Activated CD4-positive, alpha-beta memory T cell treated with anti-CD3 and anti-CD28 coated beads for 36 hours (primary cell): ENCODE measurements at regions of chr19 and their contacts with region 1.

Region 1: GRCh38 chr19:48970923-48971395 is 5.8 kb downstream of the FTL start:
- DNase-seq: peak; percentile 87
- H3K4me3 Mint-ChIP-seq: no peak overlapping the region
- H3K27ac Mint-ChIP-seq: no peak overlapping the region
- H3K4me1 Mint-ChIP-seq: peaks cover 21% of the 10 kb centered on the region
- H3K27me3 Mint-ChIP-seq: no peaks in the 10 kb centered on the region

Region 2: DNA sequence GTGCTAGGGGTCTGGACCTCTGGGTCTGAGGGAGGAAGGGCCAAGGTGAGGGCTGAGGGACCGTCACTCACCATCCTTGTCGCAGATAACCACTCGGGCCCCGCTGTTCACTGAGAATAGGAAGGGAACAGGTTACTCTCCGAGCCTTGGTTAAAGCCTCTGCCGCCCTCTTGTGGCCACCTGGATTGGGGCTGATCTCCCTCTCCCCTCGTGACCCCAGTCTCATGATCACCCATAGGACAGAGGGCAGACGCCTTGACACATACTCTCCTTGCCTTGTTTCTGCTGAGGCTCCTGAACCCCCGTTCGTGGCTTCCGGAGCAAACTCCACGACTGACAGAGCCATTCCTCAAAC is 135.2 kb before region 1 on chr19:
- CTCF ChIA-PET with region 1: interaction called, 14 read pairs
- POLR2A ChIA-PET with region 1: no interaction called
- intact Hi-C with region 1: loop called (anchors 2 kb)
- DNase-seq: peak; percentile 96
- H3K4me3 Mint-ChIP-seq: peak overlapping the region; percentile 73
- H3K27ac Mint-ChIP-seq: no peak overlapping the region
- H3K4me1 Mint-ChIP-seq: peaks cover 14% of the 10 kb centered on the region
- H3K27me3 Mint-ChIP-seq: peaks cover 9% of the 10 kb centered on the region

Region 3: DNA sequence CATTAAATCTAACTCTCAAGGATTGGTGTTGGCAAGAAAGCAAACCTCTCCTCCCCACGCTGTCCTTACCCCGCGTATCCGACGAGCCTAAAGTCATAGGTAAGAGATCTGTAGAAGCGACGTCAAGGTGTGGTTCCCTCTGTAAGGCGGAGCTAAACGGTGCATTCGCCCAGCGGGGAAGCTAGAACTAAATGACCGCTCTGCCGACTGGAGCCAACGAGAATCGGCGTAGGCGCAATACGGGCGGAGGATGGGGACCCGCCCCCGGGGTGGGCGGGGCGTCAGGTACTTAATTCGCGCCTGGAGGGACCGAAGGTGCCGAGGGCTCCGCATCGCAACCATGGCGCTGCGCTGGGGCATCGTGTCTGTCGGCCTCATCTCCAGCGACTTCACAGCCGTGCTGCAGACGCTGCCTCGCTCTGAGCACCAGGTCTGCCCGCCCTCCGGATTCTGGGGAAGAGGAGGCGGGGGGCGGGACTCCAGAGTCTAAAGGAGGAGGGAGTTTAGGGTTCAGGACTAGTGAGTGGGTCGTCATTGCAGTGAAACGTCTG is 37.5 kb before region 1 on chr19 and contains the start of gene DHDH:
- CTCF ChIA-PET with region 1: interaction called, 11 read pairs
- POLR2A ChIA-PET with region 1: no interaction called
- intact Hi-C with region 1: loop called (anchors 2 kb)
- DNase-seq: peak; percentile 89
- H3K4me3 Mint-ChIP-seq: peak within 1 kb of the TSS; percentile 78
- H3K27ac Mint-ChIP-seq: peak within 1 kb of the TSS; percentile 69
- H3K4me1 Mint-ChIP-seq: peaks cover 10% of the 10 kb centered on the region
- H3K27me3 Mint-ChIP-seq: no peaks in the 10 kb centered on the region
- total RNA-seq, gene DHDH: 2.0 to 2.8 TPM

Region 4: GRCh38 chr19:48954595-48955310 is 16.2 kb before region 1 on chr19 and contains the start of gene BAX:
- CTCF ChIA-PET with region 1: interaction called, 25 read pairs
- POLR2A ChIA-PET with region 1: interaction called, 3 read pairs
- intact Hi-C with region 1: no loop called
- DNase-seq: peak; percentile 98
- H3K4me3 Mint-ChIP-seq: peak within 1 kb of the TSS; percentile 82
- H3K27ac Mint-ChIP-seq: peak within 1 kb of the TSS; percentile 89
- H3K4me1 Mint-ChIP-seq: peaks cover 27% of the 10 kb centered on the region
- H3K27me3 Mint-ChIP-seq: no peaks in the 10 kb centered on the region
- total RNA-seq, gene BAX: 173 to 181 TPM

Region 5: DNA sequence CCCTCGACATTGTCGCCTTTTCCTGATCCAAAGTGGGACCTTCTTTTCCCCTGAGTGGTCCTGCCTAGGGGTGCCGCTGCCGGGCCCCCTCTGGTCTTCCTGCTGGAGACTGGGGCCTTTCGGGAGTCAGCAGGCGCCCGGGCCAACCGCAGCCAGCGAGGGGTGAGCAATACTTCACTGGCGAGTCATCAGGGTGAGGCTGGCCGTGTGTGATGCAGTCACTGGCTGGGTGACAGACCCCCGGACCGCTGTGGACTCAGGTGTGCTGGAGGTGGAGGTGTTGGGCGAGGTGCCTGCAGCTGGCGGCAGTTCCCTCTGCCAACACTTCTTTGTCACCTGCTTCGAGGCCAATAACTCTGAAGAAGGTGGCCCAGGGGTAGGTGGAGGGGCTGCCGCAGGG is 71.2 kb after region 1 on chr19:
- CTCF ChIA-PET with region 1: no interaction called
- POLR2A ChIA-PET with region 1: no interaction called
- intact Hi-C with region 1: no loop called
- DNase-seq: no peak
- H3K4me3 Mint-ChIP-seq: no peak overlapping the region
- H3K27ac Mint-ChIP-seq: no peak overlapping the region
- H3K4me1 Mint-ChIP-seq: no peaks in the 10 kb centered on the region
- H3K27me3 Mint-ChIP-seq: no peaks in the 10 kb centered on the region